ENCODE measurements at regions of chr11 and their contacts with region 1.

Region 1: GRCh38 chr11:92253945-92254344 is 29.3 kb downstream of the FAT3 start:
- DNase-seq: no peak

Region 2: GRCh38 chr11:92285776-92286175 is 31.8 kb after region 1 on chr11:
- intact Hi-C with region 1: loop called in 1 of 2 experiments (anchors 1 kb)
- DNase-seq: no peak